ENCODE measurements at regions of chr19 and their contacts with region 1.

Region 1: DNA sequence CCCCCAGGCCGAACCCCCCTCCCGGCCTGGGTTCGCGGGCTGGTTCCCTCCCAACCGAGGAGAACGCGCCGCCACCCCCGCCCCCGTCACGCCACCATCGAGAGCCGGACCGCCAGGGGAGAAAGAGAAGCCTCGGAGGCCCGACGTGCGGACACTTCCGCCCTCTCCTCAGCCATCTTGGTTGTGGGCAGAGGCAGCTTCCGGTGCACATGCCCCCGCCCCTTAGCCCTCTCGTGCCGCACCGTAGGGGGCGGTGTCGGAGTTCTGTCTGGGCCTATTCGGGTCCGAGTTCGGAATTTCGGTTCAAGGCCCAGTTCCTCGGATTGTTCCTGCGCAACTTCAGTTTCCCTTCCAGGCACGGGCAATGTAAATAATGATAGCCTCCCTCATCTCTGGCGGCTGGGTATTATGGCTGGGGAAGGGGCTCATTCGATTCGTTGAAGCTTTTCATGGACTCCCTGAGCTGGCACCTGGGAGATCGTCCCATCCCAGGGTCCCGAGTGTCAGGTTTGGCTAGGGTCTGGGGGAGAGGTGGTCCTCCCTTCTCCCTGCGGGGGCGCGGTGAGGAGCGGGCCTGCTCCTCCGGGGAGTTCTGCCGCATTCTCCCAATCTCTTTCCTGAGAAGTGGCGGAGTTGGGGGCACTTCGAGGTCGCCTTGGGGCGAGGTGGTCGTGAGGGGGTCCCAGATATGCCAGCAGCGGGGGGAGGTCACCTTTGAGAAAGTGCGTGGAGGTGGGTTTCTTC is at the starts of genes IER2 and STX10:
- DNase-seq: peak; percentile 97
- ATAC-seq: peak; percentile 51
- H3K4me3 Mint-ChIP-seq: peak within 1 kb of the TSS; percentile 96
- H3K27ac Mint-ChIP-seq: peak within 1 kb of the TSS; percentile 91
- H3K4me1 Mint-ChIP-seq: peaks cover 19% of the 10 kb centered on the region
- H3K27me3 Mint-ChIP-seq: no peaks in the 10 kb centered on the region
- total RNA-seq, gene IER2: 148 to 209 TPM
- total RNA-seq, gene STX10: 58.6 to 70.1 TPM

Region 2: GRCh38 chr19:13051267-13052165 is 98.8 kb before region 1 on chr19:
- CTCF ChIA-PET with region 1: no interaction called
- DNase-seq: no peak
- ATAC-seq: peak; percentile 42
- H3K4me3 Mint-ChIP-seq: no peak overlapping the region
- H3K27ac Mint-ChIP-seq: no peak overlapping the region
- H3K4me1 Mint-ChIP-seq: peaks cover 2% of the 10 kb centered on the region
- H3K27me3 Mint-ChIP-seq: peaks cover 40% of the 10 kb centered on the region

Region 3: GRCh38 chr19:13117772-13118423 is 32.5 kb before region 1 on chr19 and contains the start of gene NACC1:
- CTCF ChIA-PET with region 1: interaction called, 11 read pairs
- DNase-seq: peak; percentile 93
- ATAC-seq: peak; percentile 88
- H3K4me3 Mint-ChIP-seq: peak within 1 kb of the TSS; percentile 93
- H3K27ac Mint-ChIP-seq: peak within 1 kb of the TSS; percentile 96
- H3K4me1 Mint-ChIP-seq: peaks cover 56% of the 10 kb centered on the region
- H3K27me3 Mint-ChIP-seq: no peaks in the 10 kb centered on the region
- total RNA-seq, gene NACC1: 82.2 to 96.0 TPM

Region 4: DNA sequence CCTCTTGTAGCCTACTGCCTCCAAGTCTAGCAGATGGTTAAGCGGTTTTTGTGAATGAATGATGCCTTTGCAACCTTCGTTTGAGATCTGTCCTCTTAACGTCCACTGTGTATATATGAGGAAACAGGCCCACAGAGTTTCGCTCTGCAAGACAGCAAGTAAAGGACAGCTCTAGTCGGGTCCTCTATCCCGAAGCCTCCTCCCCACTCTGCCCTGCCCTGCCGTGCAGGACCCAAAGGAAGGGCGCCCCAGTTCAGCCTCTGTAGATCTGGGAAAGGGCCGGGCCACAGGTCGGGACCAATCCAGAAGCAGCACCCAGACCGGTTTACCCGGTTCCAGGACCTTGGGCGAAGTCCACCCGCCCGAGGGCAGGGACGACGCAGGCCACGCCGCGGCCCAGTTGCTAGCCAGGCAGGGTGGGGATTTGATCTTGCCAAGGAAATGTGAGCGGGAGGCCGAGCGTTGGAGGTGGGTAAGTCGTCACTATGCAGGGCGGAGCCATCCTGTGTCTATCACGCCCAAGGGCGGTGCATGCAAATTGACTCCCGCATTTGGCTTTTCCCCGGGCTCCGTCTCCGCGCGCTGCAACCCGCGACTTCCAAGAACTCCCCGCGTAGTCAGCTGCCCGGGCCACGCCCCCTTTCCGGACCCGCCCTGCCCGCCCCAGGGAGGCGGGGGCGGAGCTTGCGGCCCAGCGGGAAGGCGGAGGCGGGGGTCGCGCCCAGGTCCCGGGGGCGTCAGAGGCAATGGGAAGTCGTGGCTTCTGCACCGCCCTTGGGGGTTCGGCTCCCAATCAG is 12.4 kb after region 1 on chr19:
- CTCF ChIA-PET with region 1: interaction called, 58 read pairs
- DNase-seq: peak; percentile 97
- ATAC-seq: peak; percentile 68
- H3K4me3 Mint-ChIP-seq: peak overlapping the region; percentile 86
- H3K27ac Mint-ChIP-seq: peak overlapping the region; percentile 95
- H3K4me1 Mint-ChIP-seq: peaks cover 77% of the 10 kb centered on the region
- H3K27me3 Mint-ChIP-seq: no peaks in the 10 kb centered on the region

Region 5: GRCh38 chr19:13172068-13172896 is 21.9 kb after region 1 on chr19:
- CTCF ChIA-PET with region 1: interaction called, 58 read pairs
- DNase-seq: peak; percentile 82
- ATAC-seq: peak; percentile 5
- H3K4me3 Mint-ChIP-seq: peak overlapping the region; percentile 71
- H3K27ac Mint-ChIP-seq: peak overlapping the region; percentile 95
- H3K4me1 Mint-ChIP-seq: peaks cover 55% of the 10 kb centered on the region
- H3K27me3 Mint-ChIP-seq: no peaks in the 10 kb centered on the region

Region 6: GRCh38 chr19:13181747-13182388 is 31.5 kb after region 1 on chr19:
- CTCF ChIA-PET with region 1: interaction called, 12 read pairs
- DNase-seq: peak; percentile 55
- ATAC-seq: peak; percentile 39
- H3K4me3 Mint-ChIP-seq: no peak overlapping the region
- H3K27ac Mint-ChIP-seq: peak overlapping the region; percentile 76
- H3K4me1 Mint-ChIP-seq: peaks cover 20% of the 10 kb centered on the region
- H3K27me3 Mint-ChIP-seq: no peaks in the 10 kb centered on the region

Region 7: DNA sequence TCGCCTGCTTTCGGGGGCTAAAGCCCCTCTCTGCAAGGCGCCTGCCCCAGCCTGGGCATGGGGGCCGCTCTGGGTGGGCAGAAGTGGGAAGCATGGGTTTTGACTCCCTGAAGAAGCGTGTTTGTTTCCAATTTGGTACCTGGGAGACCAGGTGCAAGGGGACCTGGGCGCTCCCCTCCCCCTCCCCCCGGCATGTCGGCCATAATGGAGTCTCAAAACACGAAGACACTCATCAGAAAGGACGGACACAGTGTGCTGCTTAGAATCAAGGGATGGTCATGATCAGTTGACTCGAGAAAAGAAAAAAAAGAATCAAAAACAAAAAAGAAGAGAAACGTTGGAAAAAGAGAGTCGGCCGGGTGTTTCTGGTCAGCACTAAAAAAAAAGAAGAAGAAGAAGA is 76.6 kb after region 1 on chr19:
- CTCF ChIA-PET with region 1: no interaction called
- DNase-seq: no peak
- ATAC-seq: no peak
- H3K4me3 Mint-ChIP-seq: no peak overlapping the region
- H3K27ac Mint-ChIP-seq: no peak overlapping the region
- H3K4me1 Mint-ChIP-seq: peaks cover 2% of the 10 kb centered on the region
- H3K27me3 Mint-ChIP-seq: peaks cover 6% of the 10 kb centered on the region

Measured in activated CD8-positive, alpha-beta memory T cell treated with anti-CD3 and anti-CD28 coated beads, Interleukin-2, amount 10 ng/mL, durations not matched to agents 7 days and 5 days (primary cell).